ENCODE measurements at regions of chr17 and their contacts with region 1.

Region 1: GRCh38 chr17:73297934-73298861 is 13.6 kb downstream of the CDC42EP4 start:
- DNase-seq: peak in 2 of 3 donors; percentile 79 to 86
- H3K4me3 ChIP-seq: peak overlapping the region in 2 of 7 experiments; percentile 59
- H3K27ac ChIP-seq: no peak overlapping the region
- H3K4me1 ChIP-seq: peaks cover 5 to 11% (median 10%) of the 10 kb centered on the region in 4 experiments
- H3K27me3 ChIP-seq: no peaks in the 10 kb centered on the region

Region 2: GRCh38 chr17:73311428-73311780 is 13.2 kb after region 1 on chr17:
- CTCF ChIA-PET with region 1: interaction called, 12 read pairs
- POLR2A ChIA-PET with region 1: no interaction called
- DNase-seq: no peak
- H3K4me3 ChIP-seq: peak overlapping the region; percentile 72 to 88 (median 81)
- H3K27ac ChIP-seq: peak overlapping the region in 1 of 2 experiments; percentile 66
- H3K4me1 ChIP-seq: peaks cover 0 to 41% (median 36%) of the 10 kb centered on the region in 4 experiments
- H3K27me3 ChIP-seq: peaks cover 0 to 2% (median 0%) of the 10 kb centered on the region in 5 experiments

Region 3: GRCh38 chr17:73410586-73411312 is 112.6 kb after region 1 on chr17:
- CTCF ChIA-PET with region 1: no interaction called
- POLR2A ChIA-PET with region 1: no interaction called
- DNase-seq: no peak
- H3K4me3 ChIP-seq: no peak overlapping the region
- H3K27ac ChIP-seq: no peak overlapping the region
- H3K4me1 ChIP-seq: no peaks in the 10 kb centered on the region
- H3K27me3 ChIP-seq: no peaks in the 10 kb centered on the region

Measured in common myeloid progenitor, CD34-positive (primary cell).